H1 (cell line): ENCODE measurements at regions of chr4 and their contacts with region 1.

Region 1: GRCh38 chr4:82428969-82429727 is 1.1 kb downstream of the HNRNPDL start:
- DNase-seq: peak; percentile 76 to 96
- H3K4me3 ChIP-seq: peak overlapping the region; percentile 94 to 97 (median 94)
- H3K27ac ChIP-seq: peak overlapping the region; percentile 99
- H3K4me1 ChIP-seq: peaks cover 0 to 4% (median 2%) of the 10 kb centered on the region in 4 experiments; a peak in 3 of 7 replicates
- H3K27me3 ChIP-seq: no peaks in the 10 kb centered on the region
- CTCF ChIP-seq: peak; percentile 59 to 75 (median 75)
- EP300 ChIP-seq: no peak
- POLR2A ChIP-seq: peak; percentile 81 to 88; a peak in 2 of 3 replicates
- RAD21 ChIP-seq: 0 out of 4 replicates have a peak, but pooled peaks of 1 of the 2 experiments have one; percentile 24

Region 2: DNA sequence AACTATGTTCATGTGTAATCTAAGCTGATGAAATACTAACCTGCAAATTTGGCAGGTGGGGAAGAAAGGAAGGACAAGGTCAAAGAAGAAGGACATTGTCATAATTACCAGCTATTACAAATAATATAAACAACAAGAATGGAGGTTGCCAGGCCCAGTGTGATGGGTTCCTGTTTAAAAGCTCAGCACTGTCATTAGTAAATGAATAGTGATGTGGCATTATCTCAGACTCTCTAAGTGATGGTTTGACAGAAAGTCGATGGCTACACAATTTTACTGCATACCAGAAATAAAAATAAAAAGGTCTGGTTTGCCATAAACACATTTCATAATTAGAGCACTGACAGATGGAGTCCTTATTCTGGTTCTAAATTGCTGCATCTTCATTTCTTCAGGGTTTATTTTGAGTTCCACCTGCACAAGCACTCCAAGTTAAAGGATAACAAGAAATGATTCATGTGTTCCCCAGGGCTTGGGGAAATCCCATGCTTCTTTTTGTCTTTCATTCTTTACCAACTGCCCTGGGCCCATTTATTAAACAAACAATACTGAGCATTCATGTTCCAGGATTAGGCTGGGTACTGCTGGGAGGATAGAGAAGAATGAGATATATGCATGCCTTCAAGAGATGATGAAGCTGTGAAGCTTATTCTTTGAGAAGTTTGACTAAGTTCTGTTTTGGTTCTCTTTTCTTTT is 589.7 kb before region 1 on chr4:
- CTCF ChIA-PET with region 1: no interaction called
- POLR2A ChIA-PET with region 1: no interaction called
- DNase-seq: no peak
- H3K4me3 ChIP-seq: no peak overlapping the region
- H3K27ac ChIP-seq: no peak overlapping the region
- H3K4me1 ChIP-seq: no peaks in the 10 kb centered on the region
- H3K27me3 ChIP-seq: peaks cover 0 to 1% (median 0%) of the 10 kb centered on the region in 4 experiments; a peak in 1 of 7 replicates
- CTCF ChIP-seq: no peak
- EP300 ChIP-seq: no peak
- POLR2A ChIP-seq: no peak
- RAD21 ChIP-seq: no peak

Region 3: GRCh38 chr4:82352913-82353366 is 76.2 kb before region 1 on chr4:
- CTCF ChIA-PET with region 1: interaction called, 3 read pairs
- POLR2A ChIA-PET with region 1: interaction called, 11 read pairs
- DNase-seq: no peak
- H3K4me3 ChIP-seq: no peak overlapping the region
- H3K27ac ChIP-seq: no peak overlapping the region
- H3K4me1 ChIP-seq: no peaks in the 10 kb centered on the region
- H3K27me3 ChIP-seq: peaks cover 0 to 1% (median 0%) of the 10 kb centered on the region in 4 experiments; a peak in 1 of 7 replicates
- CTCF ChIP-seq: no peak
- EP300 ChIP-seq: no peak
- POLR2A ChIP-seq: no peak
- RAD21 ChIP-seq: no peak

Region 4: DNA sequence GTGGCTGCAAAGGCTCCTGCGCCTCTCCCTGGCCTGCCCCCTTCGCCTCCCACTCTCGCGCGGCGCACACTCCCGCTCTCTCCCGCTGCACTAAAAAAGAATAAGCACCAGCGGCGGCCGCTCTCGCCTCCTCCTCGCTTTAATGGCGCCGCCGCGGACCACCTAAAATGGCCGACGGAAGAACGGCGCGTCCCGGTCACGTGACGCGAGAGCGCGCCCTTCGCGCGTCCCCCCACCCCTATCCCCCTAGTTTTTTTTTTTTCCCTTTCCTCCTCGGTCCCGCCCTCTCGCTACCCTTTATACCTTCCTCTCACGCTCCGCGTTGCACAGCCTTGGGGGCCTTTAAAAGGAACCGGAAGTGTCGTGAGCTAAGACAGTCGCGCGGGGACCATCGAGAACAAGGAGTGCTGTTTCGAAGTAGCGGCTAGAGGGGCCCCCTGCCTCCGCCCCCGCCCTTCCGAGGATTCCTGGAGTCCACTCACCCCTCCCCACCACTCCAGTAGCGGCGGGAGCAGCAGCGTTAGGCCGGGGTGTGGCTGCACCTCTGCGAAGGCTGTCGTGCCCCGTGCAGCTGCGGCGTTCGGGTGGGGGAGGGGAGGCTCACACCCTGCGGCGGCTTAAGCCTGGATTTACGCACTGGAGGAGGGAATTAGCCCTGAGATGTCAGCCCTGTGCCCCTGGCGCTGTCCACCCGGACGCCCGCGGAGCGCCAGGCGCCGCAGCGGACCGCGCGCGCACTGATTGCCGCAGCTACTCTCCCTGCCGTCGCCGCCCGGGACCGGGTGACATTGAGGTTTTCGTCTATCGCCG is 55.1 kb before region 1 on chr4 and contains the start of gene HNRNPD:
- CTCF ChIA-PET with region 1: interaction called, 4 read pairs
- POLR2A ChIA-PET with region 1: interaction called, 152 read pairs
- DNase-seq: peak; percentile 94 to 96
- H3K4me3 ChIP-seq: peak within 1 kb of the TSS; percentile 91 to 99 (median 97)
- H3K27ac ChIP-seq: peak within 1 kb of the TSS; percentile 99
- H3K4me1 ChIP-seq: no peaks in the 10 kb centered on the region; a peak in 2 of 7 replicates
- H3K27me3 ChIP-seq: no peaks in the 10 kb centered on the region
- CTCF ChIP-seq: no peak
- EP300 ChIP-seq: peak in 1 of 2 experiments; percentile 70; a peak in 1 of 3 replicates
- POLR2A ChIP-seq: peak; percentile 86; a peak in 2 of 3 replicates
- RAD21 ChIP-seq: peak in 1 of 2 experiments; percentile 22; a peak in 3 of 4 replicates
- total RNA-seq, gene HNRNPD: 642 and 646 TPM in 2 replicates

Region 5: GRCh38 chr4:82394910-82395309 is 34.2 kb before region 1 on chr4:
- CTCF ChIA-PET with region 1: interaction called, 3 read pairs
- POLR2A ChIA-PET with region 1: interaction called, 29 read pairs
- DNase-seq: no peak
- H3K4me3 ChIP-seq: no peak overlapping the region
- H3K27ac ChIP-seq: no peak overlapping the region
- H3K4me1 ChIP-seq: no peaks in the 10 kb centered on the region
- H3K27me3 ChIP-seq: no peaks in the 10 kb centered on the region
- CTCF ChIP-seq: no peak
- EP300 ChIP-seq: no peak
- POLR2A ChIP-seq: no peak
- RAD21 ChIP-seq: no peak

Region 6: DNA sequence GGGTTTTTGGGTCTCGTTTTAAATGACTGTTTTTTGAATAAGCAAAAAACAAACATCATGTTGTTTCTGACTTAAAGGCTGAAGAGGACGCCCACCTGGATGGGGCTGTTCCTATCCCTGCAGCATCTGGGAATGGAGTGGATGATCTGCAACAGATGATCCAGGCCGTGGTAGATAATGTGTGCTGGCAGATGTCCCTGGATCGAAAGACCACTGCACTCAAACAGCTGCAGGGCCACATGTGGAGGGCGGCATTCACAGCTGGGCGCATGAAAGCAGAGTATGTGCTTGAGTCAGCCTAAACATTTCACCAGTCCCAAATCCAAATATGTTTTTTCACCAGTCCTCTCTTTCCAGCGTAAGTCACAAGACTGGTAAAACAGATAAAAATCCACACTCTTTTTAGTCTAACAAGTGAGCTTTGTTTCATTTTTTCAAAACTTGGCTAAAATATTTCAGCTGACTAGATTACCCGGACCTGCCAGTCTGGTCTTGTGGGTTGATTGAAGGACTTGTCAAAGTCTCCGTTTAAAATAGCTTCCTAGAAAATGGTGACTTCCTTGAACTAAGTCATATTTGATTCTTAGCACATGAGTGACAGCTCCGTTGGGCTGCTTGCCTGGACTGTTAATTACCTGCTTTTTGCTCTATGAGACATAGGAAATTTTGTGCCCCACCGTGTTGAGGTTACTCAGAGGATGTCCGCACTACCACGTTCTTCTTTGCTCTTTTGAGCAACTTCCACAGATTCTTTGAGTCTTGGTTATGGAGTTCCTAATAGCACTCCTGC is 22.0 kb after region 1 on chr4:
- CTCF ChIA-PET with region 1: no interaction called
- POLR2A ChIA-PET with region 1: interaction called, 126 read pairs
- DNase-seq: no peak
- H3K4me3 ChIP-seq: no peak overlapping the region
- H3K27ac ChIP-seq: no peak overlapping the region
- H3K4me1 ChIP-seq: peaks cover 0 to 2% (median 0%) of the 10 kb centered on the region in 4 experiments; a peak in 1 of 7 replicates
- H3K27me3 ChIP-seq: no peaks in the 10 kb centered on the region
- CTCF ChIP-seq: no peak
- EP300 ChIP-seq: no peak
- POLR2A ChIP-seq: no peak
- RAD21 ChIP-seq: no peak